B cell (primary cell): ENCODE measurements at regions of chr2 and their contacts with region 1.

Region 1: DNA sequence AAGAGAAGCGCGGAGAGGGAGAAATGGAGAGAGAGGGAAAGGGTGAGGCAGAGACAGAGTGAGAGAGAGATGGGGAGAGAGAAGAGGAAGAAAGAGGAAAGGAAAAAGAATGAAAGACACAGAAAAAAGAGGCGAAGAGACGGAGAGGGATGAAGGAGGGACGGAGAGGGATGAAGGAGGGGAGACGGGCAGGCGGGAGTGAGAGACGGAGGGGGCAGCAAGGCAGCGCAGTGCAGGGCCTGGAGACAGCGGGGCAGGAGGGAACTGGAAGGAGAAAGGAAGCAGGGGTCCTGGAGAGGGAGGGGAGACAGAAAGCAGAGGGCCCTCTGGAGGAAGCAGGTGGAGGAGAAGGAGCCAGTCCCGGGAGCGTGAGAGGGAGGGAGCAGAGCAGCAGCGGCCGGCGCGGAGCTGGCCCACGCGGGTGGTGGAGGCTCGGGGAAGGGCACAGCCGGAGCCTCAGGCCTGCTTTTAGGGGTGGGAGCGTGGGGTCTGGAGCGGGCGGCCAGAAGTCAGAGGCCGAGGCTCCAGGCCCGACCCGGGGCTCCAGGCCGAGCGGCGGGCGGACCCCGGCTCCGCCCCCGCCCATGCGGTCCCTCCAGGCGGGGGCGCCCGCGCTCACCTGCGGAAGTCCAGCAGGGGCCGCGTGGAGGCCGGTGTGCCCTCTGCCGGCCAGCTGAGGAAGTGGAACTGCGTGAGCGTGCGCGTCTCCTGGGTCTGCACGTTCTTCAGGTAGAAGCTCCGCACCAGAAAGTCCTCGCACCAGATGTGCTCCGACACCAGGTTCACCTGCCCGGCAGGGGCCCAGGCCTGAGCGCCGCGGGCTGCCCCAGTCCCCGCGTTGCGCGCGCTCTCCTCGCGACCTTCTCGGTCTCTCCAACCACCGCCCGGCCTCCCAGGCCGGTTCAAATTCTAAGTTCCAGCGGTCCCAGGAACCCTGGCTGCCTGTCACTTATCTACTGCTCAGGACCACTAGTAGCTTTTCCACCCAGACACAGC is 14.5 kb downstream of the PTPRN start:
- DNase-seq: peak; percentile 95
- ATAC-seq: peak; percentile 97
- H3K4me3 ChIP-seq: peak overlapping the region in 4 of 5 experiments; percentile 48 to 67 (median 60)
- H3K4me3 Mint-ChIP-seq: peak overlapping the region; percentile 80
- H3K27ac ChIP-seq: peak overlapping the region; percentile 62 to 74
- H3K27ac Mint-ChIP-seq: peak overlapping the region; percentile 74
- H3K4me1 ChIP-seq: peaks cover 14 to 19% of the 10 kb centered on the region in 2 donors
- H3K4me1 Mint-ChIP-seq: peaks cover 16% of the 10 kb centered on the region
- H3K27me3 ChIP-seq: peaks cover 0 to 7% (median 1%) of the 10 kb centered on the region in 4 experiments
- H3K27me3 Mint-ChIP-seq: no peaks in the 10 kb centered on the region
- CTCF ChIP-seq: peak; percentile 99

Region 2: DNA sequence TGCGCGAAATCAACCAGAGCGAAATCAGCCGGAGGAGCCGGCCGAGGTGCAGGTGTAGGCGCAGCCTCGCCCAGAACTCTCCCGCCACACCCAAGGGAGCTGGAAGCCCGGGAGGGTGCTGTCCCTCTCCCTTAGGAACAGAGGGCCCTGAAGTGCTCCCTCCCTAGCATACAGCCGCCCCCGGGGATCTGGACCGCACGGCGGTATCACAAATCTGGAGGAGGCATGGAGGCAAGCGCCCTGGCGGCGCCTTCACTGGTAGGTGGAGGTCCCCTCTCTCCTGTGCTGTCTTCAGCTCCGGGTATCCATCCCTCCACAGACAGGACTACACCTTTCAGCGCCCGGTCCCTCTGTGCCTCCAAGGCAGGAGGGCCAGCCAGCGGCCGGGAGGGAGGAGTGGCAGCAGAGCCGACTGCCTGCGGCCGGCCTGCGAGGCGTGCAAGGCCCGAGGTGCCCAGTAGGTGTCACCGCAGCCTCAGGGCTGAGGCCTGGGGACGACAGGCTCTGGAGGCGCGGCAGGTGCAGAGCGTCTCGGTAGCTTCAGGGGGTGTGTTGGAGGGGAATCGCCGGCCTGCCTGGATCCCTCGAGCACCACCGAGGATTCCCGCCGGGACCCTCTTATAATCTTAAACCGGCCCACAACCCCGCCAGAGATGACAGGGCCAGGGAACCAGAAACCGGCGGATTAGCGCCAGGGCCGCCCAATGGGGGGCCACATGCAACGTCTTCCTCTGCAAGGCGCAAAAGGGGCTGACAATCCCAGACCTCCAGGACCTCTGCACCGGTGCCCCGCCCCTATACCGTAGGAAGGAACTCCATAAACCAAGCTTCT is 236.7 kb before region 1 on chr2:
- CTCF ChIA-PET with region 1: interaction called, 6 read pairs
- POLR2A ChIA-PET with region 1: no interaction called
- intact Hi-C with region 1: loop called (anchors 1 kb)
- DNase-seq: peak; percentile 85
- ATAC-seq: peak; percentile 98
- H3K4me3 ChIP-seq: peak overlapping the region in 2 of 5 experiments; percentile 12 to 35
- H3K4me3 Mint-ChIP-seq: peak overlapping the region; percentile 74
- H3K27ac ChIP-seq: no peak overlapping the region
- H3K27ac Mint-ChIP-seq: peak overlapping the region; percentile 46
- H3K4me1 ChIP-seq: peaks cover 35 to 41% of the 10 kb centered on the region in 2 donors
- H3K4me1 Mint-ChIP-seq: peaks cover 24% of the 10 kb centered on the region
- H3K27me3 ChIP-seq: peaks cover 0 to 59% (median 45%) of the 10 kb centered on the region in 4 experiments
- H3K27me3 Mint-ChIP-seq: peaks cover 50% of the 10 kb centered on the region
- CTCF ChIP-seq: peak; percentile 91

Region 3: DNA sequence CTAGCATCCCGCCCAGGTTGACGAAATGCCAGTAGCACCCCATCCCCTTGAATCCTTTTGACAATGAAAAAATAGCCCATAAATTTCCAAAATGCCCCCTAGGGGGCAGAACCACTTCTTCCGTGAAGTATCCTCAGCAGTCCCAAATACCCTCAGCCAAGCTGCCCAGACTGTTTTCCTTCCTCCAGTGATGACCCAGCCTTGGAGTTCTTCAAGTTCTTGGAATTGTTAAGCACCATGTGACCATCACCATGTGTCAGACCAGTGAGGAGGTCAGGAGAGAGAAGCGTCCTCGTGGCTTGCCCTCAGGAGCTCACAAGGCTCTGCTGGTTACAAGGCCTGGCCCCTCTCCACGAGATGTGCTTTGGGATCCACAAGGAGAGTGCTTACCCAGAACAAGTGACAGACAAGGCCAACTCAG is 123.4 kb before region 1 on chr2:
- CTCF ChIA-PET with region 1: interaction called, 136 read pairs
- POLR2A ChIA-PET with region 1: interaction called, 10 read pairs
- intact Hi-C with region 1: loop called (anchors 1 kb)
- DNase-seq: peak; percentile 67
- ATAC-seq: peak; percentile 52
- H3K4me3 ChIP-seq: no peak overlapping the region
- H3K4me3 Mint-ChIP-seq: no peak overlapping the region
- H3K27ac ChIP-seq: peak overlapping the region in 1 of 2 donors; percentile 21
- H3K27ac Mint-ChIP-seq: peak overlapping the region; percentile 67
- H3K4me1 ChIP-seq: peaks cover 6 to 28% of the 10 kb centered on the region in 2 donors
- H3K4me1 Mint-ChIP-seq: peaks cover 25% of the 10 kb centered on the region
- H3K27me3 ChIP-seq: no peaks in the 10 kb centered on the region
- H3K27me3 Mint-ChIP-seq: no peaks in the 10 kb centered on the region
- CTCF ChIP-seq: peak; percentile 83

Region 4: DNA sequence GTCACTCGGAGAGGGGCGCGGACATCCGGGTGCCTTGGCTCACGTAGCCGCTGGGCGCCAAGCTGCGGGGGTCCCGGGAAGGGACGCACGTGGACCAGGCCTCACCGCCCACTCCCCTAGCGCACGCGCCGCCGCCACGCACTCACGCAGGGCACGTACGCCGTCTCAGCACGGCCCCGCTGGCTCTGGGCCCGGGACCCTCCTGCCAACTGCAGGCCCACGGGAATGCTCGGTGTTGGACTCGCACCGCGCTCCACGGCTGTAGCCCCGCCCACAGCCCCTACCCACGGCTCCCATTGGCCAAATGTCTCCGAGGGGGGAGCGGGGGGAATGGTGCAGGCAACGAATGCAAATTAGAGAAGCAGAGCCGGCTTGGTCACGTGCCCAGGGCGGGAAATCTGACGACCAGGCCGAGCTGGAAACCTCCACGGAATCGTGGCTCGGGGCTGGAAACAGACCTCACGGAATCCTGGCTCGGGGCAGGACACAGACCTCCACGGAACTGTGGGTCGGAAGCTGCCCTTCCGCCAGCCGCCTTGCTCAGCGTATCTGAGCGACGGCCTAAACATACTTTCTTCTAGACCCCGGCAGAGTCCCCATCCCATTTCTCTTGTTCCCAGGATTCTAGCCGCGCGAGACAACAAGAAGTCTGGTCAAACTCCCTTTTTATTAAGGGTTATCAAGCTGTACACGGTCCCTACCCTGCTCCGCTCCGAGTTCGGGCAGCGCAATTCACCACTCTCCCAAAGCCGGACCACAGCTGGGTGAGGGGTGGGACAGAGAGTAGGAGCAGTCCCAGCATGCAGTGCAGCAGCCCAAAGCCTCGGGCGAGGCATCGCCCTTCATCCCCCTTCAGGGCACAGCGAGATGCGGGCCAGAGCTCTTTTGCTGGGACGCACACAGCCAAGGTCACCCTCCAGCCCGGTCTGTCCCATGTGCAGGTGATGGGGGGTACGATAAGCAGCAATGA is 75.6 kb before region 1 on chr2 and contains the start of gene ABCB6:
- CTCF ChIA-PET with region 1: interaction called, 26 read pairs
- POLR2A ChIA-PET with region 1: interaction called, 4 read pairs
- intact Hi-C with region 1: loop called (anchors 2 kb)
- DNase-seq: peak; percentile 92
- ATAC-seq: peak; percentile 95
- H3K4me3 ChIP-seq: peak within 1 kb of the TSS; percentile 51 to 74 (median 66)
- H3K4me3 Mint-ChIP-seq: peak within 1 kb of the TSS; percentile 87
- H3K27ac ChIP-seq: peak within 1 kb of the TSS; percentile 0 to 55
- H3K27ac Mint-ChIP-seq: peak within 1 kb of the TSS; percentile 86
- H3K4me1 ChIP-seq: peaks cover 17 to 21% of the 10 kb centered on the region in 2 donors
- H3K4me1 Mint-ChIP-seq: peaks cover 20% of the 10 kb centered on the region
- H3K27me3 ChIP-seq: no peaks in the 10 kb centered on the region
- H3K27me3 Mint-ChIP-seq: no peaks in the 10 kb centered on the region
- CTCF ChIP-seq: no peak
- total RNA-seq, gene ABCB6: 10.5 and 12.3 TPM in 2 replicates

Region 5: DNA sequence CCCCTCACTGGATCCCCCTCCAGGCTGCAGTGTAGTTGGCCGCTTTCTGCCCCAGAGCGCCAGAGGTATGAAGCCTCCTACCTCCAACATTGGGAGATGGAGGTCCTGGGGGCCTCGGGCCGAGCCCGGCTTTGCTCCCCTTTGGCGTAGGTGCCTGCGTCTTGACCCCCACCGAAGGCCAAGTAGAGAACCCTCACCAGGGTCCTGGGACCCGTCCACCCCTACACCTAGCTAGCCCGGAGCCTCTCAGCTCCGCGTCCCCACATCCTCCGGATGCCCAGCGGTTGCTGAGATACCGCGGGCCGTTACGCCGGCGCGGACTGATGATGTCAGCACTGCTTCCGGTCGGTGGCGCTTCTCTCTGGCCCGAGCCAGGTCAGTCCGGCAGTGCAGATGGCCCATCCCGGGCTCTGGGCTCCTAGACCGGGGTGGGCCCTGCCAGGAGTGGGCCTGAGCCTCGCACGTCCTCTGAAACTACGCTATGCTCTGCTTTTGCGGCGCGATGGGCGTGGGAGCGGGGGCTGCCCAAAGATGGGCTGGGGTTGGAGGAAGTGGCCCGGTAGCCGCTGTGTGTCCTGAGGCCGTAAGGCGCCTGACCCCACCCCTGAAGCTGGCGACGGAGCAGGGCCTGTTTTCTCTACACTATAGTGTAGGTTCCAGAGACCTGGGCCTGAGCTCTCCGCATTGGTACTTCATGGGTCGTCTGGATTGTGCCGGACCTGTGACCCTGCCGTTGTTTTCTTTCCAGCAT is 49.3 kb before region 1 on chr2 and contains the starts of genes GLB1L and STK16:
- CTCF ChIA-PET with region 1: interaction called, 69 read pairs
- POLR2A ChIA-PET with region 1: interaction called, 7 read pairs
- intact Hi-C with region 1: no loop called
- DNase-seq: peak; percentile 93
- ATAC-seq: peak; percentile 67
- H3K4me3 ChIP-seq: peak within 1 kb of the TSS; percentile 50 to 98 (median 94)
- H3K4me3 Mint-ChIP-seq: peak within 1 kb of the TSS; percentile 92
- H3K27ac ChIP-seq: peak within 1 kb of the TSS; percentile 87 to 92
- H3K27ac Mint-ChIP-seq: peak within 1 kb of the TSS; percentile 96
- H3K4me1 ChIP-seq: peaks cover 52 to 58% of the 10 kb centered on the region in 2 donors
- H3K4me1 Mint-ChIP-seq: peaks cover 62% of the 10 kb centered on the region
- H3K27me3 ChIP-seq: no peaks in the 10 kb centered on the region
- H3K27me3 Mint-ChIP-seq: no peaks in the 10 kb centered on the region
- CTCF ChIP-seq: no peak
- total RNA-seq, gene GLB1L: 3.9 and 4.1 TPM in 2 replicates
- total RNA-seq, gene STK16: 29.0 and 29.3 TPM in 2 replicates

Region 6: DNA sequence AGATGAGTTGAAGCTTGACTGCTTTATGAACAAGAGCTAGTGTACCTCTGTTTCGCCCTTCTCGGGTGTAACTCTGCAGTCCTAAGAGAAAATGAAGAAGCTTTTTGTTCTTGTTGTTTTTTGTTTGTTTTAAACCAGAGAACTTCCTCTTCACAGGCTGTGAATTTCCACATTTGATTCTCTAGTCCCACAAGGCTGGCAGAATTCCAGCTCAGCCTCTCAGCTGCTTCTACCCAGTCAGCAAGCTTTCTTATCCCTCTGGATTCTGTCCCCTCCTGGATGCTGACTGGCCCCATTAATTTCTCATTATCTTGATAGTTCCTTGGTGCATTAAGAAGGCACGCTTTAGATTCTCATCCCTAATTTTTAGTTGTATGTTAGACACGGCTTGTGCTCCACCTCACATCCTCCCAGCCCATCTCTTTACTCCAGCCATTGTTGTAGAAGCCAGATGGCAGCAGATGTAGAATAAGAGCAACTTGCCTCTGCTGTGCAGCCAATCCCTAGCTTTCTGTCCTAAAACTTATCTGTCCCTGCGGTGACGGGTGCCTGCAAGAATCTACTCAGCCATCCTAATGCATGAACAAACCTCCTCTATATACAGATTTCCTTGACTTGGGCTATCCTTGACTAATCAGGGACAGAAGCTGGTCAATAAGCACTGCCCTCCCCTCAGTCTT is 50.2 kb after region 1 on chr2:
- CTCF ChIA-PET with region 1: no interaction called
- POLR2A ChIA-PET with region 1: no interaction called
- intact Hi-C with region 1: no loop called
- DNase-seq: no peak
- ATAC-seq: no peak
- H3K4me3 ChIP-seq: no peak overlapping the region
- H3K4me3 Mint-ChIP-seq: no peak overlapping the region
- H3K27ac ChIP-seq: no peak overlapping the region
- H3K27ac Mint-ChIP-seq: no peak overlapping the region
- H3K4me1 ChIP-seq: no peaks in the 10 kb centered on the region
- H3K4me1 Mint-ChIP-seq: peaks cover 1% of the 10 kb centered on the region
- H3K27me3 ChIP-seq: peaks cover 0 to 6% (median 0%) of the 10 kb centered on the region in 4 experiments
- H3K27me3 Mint-ChIP-seq: peaks cover 40% of the 10 kb centered on the region
- CTCF ChIP-seq: no peak